Heart left ventricle (tissue), 16 donors: ENCODE measurements at regions of chr20 and their contacts with region 1.

Region 1: GRCh38 chr20:38315290-38315966 is 11.5 kb downstream of the BPI start:
- DNase-seq: no peak
- ATAC-seq: peak in 1 of 4 donors; percentile 28
- H3K4me3 ChIP-seq: no peak overlapping the region
- H3K27ac ChIP-seq: no peak overlapping the region
- H3K4me1 ChIP-seq: no peaks in the 10 kb centered on the region
- H3K27me3 ChIP-seq: peaks cover 0 to 10% (median 2%) of the 10 kb centered on the region in 9 donors
- CTCF ChIP-seq: peak in 3 of 12 donors; percentile 14 to 30 (median 17)
- POLR2A ChIP-seq: no peak

Region 2: DNA sequence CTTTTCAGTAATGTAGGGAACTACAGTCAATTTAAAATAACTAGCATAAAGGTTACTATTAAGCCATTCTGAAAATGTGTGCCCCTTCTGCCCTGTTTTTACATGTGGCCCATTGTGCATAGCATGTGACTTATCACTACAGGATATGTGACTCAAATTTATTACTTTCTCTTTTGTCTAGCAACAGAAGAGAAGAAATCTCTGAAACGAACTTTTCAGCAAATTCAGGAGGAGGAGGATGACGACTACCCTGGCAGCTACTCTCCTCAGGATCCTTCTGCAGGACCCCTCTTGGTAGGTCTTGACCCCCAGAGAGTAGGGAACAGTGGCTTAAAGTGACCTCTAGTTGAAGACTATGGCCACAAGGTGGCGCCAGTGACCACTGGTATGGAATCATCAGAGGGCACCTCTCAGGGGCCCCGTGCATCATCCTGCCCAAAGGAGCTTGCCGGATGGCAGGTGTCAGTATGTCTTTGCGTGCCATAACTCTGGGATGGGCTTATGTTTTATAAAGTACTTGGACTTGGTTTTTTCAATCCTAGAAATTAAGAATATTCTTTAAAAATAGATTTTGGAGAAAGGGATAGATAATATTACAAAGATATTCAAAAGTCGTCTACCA is 258.0 kb before region 1 on chr20:
- intact Hi-C with region 1: loop called in 5 of 10 experiments (anchors 10 kb)
- DNase-seq: peak; percentile 80 to 93 (median 84)
- ATAC-seq: peak; percentile 70 to 93 (median 90)
- H3K4me3 ChIP-seq: no peak overlapping the region
- H3K27ac ChIP-seq: peak overlapping the region in 3 of 12 donors; percentile 13 to 42 (median 19)
- H3K4me1 ChIP-seq: peaks cover 0 to 31% (median 9%) of the 10 kb centered on the region in 12 donors
- H3K27me3 ChIP-seq: no peaks in the 10 kb centered on the region
- CTCF ChIP-seq: peak; percentile 85 to 96 (median 91)
- POLR2A ChIP-seq: no peak

Region 3: GRCh38 chr20:38196592-38196991 is 118.8 kb before region 1 on chr20:
- intact Hi-C with region 1: no loop called
- DNase-seq: peak; percentile 66 to 91 (median 84)
- ATAC-seq: peak; percentile 68 to 92 (median 81)
- H3K4me3 ChIP-seq: no peak overlapping the region
- H3K27ac ChIP-seq: peak overlapping the region in 7 of 12 donors; percentile 14 to 77 (median 48)
- H3K4me1 ChIP-seq: peaks cover 0 to 59% (median 8%) of the 10 kb centered on the region in 12 donors
- H3K27me3 ChIP-seq: no peaks in the 10 kb centered on the region
- CTCF ChIP-seq: no peak
- POLR2A ChIP-seq: no peak

Region 4: GRCh38 chr20:38239441-38239840 is 76.0 kb before region 1 on chr20:
- intact Hi-C with region 1: loop called in 4 of 10 experiments (anchors 5 kb)
- DNase-seq: no peak
- ATAC-seq: no peak
- H3K4me3 ChIP-seq: no peak overlapping the region
- H3K27ac ChIP-seq: no peak overlapping the region
- H3K4me1 ChIP-seq: no peaks in the 10 kb centered on the region
- H3K27me3 ChIP-seq: peaks cover 0 to 4% (median 0%) of the 10 kb centered on the region in 9 donors
- CTCF ChIP-seq: no peak
- POLR2A ChIP-seq: no peak

Region 5: DNA sequence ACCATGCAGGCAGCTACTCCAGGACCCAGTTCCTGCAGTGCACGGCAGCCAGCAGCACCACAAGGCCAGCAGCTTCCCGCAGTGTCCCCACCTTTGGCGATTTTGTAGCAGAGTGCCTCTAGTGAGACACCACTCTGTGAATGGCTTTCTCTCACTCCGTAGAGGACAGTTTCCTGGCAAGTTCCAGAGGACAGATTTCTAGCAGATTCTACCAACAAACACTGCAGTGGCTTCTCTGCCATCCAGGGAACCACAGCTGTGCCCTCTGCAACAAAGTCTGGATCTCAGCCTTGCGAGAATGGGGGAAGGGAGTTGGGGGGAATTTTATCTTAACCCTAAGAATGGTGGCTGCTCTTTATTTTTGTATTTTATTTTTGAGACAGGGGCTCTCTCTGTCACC is 91.0 kb after region 1 on chr20:
- intact Hi-C with region 1: no loop called
- DNase-seq: no peak
- ATAC-seq: no peak
- H3K4me3 ChIP-seq: no peak overlapping the region
- H3K27ac ChIP-seq: no peak overlapping the region
- H3K4me1 ChIP-seq: peaks cover 0 to 2% (median 0%) of the 10 kb centered on the region in 12 donors
- H3K27me3 ChIP-seq: no peaks in the 10 kb centered on the region
- CTCF ChIP-seq: no peak
- POLR2A ChIP-seq: no peak